HEK293T (cell line): ENCODE measurements at regions of chr14 and their contacts with region 1.

Region 1: DNA sequence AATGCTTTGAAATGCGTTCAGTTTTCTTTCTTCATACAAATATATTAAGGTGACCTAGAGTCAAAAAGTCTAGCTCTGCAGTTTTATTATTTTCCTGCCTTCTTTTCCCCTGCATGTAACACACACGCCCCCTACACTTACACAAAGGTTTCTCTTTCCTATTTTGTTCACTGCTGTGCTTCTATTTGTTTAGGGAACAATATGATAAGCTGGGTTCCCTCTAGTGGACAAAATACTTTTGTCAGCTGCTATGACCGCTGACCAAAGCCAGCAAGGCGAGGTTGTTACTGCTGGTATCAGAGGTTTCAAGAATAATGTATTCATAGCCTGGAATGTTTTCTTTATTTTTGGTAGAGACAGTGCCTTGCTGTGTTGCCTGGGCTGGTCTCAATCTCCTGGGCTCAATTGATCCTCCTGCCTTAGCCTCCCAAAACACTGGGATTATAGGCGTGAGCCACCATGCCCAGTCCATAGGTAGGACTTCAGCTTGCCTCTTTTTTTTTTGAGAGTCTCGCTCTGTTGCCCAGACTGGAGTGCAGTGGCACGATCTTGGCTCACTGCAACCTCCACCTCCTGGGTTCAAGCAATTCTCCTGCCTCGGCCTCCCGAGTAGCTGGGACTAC is 33.4 kb downstream of the FNTB start:
- DNase-seq: peak; percentile 59

Region 2: GRCh38 chr14:64986578-64987571 is 33.2 kb before region 1 on chr14 and contains the start of gene FNTB:
- CTCF ChIA-PET with region 1: interaction called, 24 read pairs
- POLR2A ChIA-PET with region 1: interaction called, 36 read pairs
- DNase-seq: peak; percentile 94

Region 3: DNA sequence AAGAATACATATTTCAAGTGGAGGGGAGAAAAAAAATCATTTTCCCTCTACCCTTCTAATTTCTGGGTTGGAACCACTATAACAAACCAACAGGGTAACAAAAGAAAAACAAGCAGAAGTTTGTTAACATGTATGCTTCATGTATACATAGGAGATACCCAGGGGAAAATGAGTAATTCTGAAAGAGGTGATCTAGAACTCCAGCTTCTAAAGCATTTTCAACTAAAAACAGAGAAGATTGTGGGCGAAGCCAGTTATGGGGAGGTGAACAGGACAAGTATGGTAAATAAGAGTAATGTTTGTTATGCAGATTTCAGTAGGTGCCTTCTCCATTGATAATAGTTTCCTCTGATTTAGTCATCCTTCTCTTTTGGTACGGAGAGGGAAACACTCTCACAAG is 16.7 kb before region 1 on chr14:
- CTCF ChIA-PET with region 1: interaction called, 11 read pairs
- POLR2A ChIA-PET with region 1: interaction called, 4 read pairs
- DNase-seq: no peak

Region 4: DNA sequence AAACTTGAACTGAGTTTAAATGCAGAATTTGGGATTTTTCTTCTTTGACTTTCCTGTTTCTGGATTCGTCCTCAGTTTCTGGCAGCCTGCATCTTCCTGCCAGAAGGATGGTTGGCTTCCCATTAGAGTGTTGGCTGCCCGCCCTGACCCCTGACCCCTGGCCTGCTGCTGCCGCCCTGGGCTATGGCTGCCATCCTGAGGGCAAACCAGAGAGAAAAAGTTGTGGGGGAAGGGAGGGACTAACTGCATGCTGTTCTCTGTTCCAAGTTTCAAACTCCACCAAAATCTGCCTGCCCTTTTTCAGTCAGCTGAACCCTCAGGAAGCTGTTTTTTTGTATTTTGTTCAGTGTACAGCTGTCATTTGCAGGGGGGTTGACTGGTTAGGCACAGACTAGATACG is 15.0 kb after region 1 on chr14:
- CTCF ChIA-PET with region 1: interaction called, 15 read pairs
- POLR2A ChIA-PET with region 1: interaction called, 3 read pairs
- DNase-seq: no peak

Region 5: DNA sequence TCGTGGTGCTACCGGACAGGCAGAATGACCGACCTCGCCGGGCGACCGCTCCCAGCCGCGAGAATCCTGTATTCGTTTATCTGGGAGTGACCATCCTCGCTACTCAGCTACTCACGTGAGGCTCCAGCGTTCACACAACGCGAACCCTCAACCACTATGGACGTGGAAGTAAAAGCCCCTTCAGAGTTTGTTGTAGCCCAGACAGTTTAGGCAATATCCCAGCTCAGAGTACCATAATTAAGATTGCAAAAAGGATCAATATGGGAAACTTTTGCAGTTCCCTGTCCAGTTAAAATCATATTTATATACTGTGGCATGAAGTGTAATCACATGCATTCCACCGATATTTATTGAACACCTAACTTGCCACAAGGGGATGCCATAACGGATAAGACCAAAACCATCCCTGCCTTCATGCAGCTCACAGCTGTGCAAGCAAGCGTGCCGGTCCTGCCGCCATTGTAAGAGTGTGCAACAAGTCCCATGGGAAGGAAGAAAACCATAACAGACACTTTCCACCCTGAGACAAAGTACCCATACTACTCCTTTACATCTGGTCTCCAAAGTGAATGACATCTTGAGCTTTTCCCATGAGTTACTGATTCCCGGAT is 83.2 kb after region 1 on chr14:
- CTCF ChIA-PET with region 1: no interaction called
- POLR2A ChIA-PET with region 1: no interaction called
- DNase-seq: peak; percentile 35